Heart left ventricle (tissue), 16 donors: ENCODE measurements at regions of chr3 and their contacts with region 1.

Region 1: GRCh38 chr3:179562591-179563270 is at the start of gene ACTL6A:
- DNase-seq: peak; percentile 100
- ATAC-seq: peak; percentile 98 to 99 (median 99)
- H3K4me3 ChIP-seq: peak within 1 kb of the TSS; percentile 73 to 97 (median 90)
- H3K27ac ChIP-seq: peak within 1 kb of the TSS; percentile 72 to 94 (median 88)
- H3K4me1 ChIP-seq: peaks cover 0 to 24% (median 12%) of the 10 kb centered on the region in 12 donors
- H3K27me3 ChIP-seq: no peaks in the 10 kb centered on the region
- CTCF ChIP-seq: no peak
- POLR2A ChIP-seq: peak in 1 of 2 donors; percentile 55
- total RNA-seq, gene ACTL6A: 14.1 to 29.8 (median 19.8) TPM

Region 2: GRCh38 chr3:179071550-179072397 is 491.0 kb before region 1 on chr3 and contains the start of gene ZMAT3:
- intact Hi-C with region 1: loop called in 1 of 10 experiments (anchors 5 kb)
- DNase-seq: peak; percentile 92 to 95 (median 93)
- ATAC-seq: peak; percentile 78 to 99 (median 98)
- H3K4me3 ChIP-seq: peak within 1 kb of the TSS; percentile 49 to 96 (median 84)
- H3K27ac ChIP-seq: peak within 1 kb of the TSS; percentile 59 to 95 (median 90)
- H3K4me1 ChIP-seq: peaks cover 0 to 42% (median 21%) of the 10 kb centered on the region in 12 donors
- H3K27me3 ChIP-seq: no peaks in the 10 kb centered on the region
- CTCF ChIP-seq: peak in 2 of 12 donors; percentile 8 to 14
- POLR2A ChIP-seq: peak in 1 of 2 donors; percentile 79
- total RNA-seq, gene ZMAT3: 10.5 to 23.2 (median 15.6) TPM

Region 3: DNA sequence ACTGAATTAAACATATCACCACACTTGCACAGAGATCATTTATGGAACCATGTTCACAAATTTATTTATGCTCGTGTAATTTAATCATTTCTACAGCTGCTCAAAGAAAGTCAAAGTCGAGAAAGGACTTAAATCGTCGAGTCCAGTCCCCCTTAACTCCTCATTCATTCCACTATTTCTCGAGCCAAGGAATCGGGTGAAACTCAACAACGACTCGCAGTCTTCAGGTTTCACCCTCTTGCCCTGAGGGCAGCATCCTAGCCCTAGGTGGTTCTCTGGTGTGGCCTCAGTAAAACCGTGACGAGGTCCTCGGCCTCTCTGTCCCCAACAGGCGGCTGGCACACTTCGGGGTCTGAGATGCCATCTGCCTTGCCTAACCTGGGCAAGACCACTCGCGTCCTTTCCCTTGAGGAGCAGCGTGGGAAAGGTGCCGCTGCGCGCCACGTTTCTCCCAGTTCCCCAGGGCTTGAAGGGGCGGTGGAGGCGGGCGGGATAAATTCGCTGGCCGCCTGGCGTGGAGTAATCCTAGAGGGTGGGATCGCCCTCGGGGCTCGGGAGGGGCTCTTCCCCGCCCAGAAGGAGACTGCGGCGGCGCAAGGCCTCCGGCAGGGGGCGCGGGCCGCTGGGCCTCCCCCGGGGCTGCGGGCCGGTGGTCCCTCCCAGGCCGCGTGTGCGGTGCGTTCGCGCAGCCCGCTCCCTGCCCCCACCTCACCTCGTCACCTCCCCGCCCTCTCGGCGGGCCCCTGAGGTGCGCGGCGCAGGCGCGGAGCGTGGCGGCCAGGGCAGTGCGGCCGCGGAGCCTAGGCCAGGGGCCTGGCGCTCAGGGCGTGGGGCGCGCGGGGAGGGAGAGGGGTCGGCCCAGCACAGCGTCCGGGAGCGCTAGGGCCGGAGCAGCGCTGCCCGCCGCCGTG is 240.2 kb before region 1 on chr3 and contains the start of gene ZNF639:
- intact Hi-C with region 1: loop called in 4 of 10 experiments (anchors 2 to 10 kb)
- DNase-seq: peak; percentile 85 to 92 (median 89)
- ATAC-seq: peak; percentile 82 to 92 (median 90)
- H3K4me3 ChIP-seq: peak within 1 kb of the TSS; percentile 38 to 97 (median 90)
- H3K27ac ChIP-seq: peak within 1 kb of the TSS; percentile 87 to 98 (median 96)
- H3K4me1 ChIP-seq: peaks cover 0 to 36% (median 22%) of the 10 kb centered on the region in 12 donors
- H3K27me3 ChIP-seq: no peaks in the 10 kb centered on the region
- CTCF ChIP-seq: peak; percentile 61 to 93 (median 89)
- POLR2A ChIP-seq: peak in 1 of 2 donors; percentile 66
- total RNA-seq, gene ZNF639: 27.1 to 46.0 (median 30.7) TPM

Region 4: DNA sequence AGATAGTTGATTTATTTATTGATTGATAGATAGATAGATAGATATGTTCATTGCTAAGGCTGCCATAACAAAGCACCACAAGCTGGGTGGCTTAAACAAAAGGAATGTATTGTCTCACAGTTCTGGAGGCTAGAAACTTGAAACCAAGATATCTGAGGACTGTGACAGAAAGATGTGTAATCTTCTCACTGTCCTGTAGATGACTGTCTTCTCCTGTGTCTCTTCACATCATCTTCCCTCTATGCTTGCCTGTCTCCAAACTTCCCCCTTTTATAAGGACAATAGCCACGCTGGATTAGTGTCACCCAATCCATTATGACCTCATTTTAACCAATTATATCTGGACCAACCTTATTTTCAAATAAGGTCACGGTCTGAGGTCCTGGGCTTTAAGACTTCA is 152.4 kb before region 1 on chr3:
- intact Hi-C with region 1: no loop called
- DNase-seq: no peak
- ATAC-seq: no peak
- H3K4me3 ChIP-seq: no peak overlapping the region
- H3K27ac ChIP-seq: no peak overlapping the region
- H3K4me1 ChIP-seq: peaks cover 0 to 7% (median 2%) of the 10 kb centered on the region in 12 donors
- H3K27me3 ChIP-seq: no peaks in the 10 kb centered on the region
- CTCF ChIP-seq: no peak
- POLR2A ChIP-seq: no peak

Region 5: DNA sequence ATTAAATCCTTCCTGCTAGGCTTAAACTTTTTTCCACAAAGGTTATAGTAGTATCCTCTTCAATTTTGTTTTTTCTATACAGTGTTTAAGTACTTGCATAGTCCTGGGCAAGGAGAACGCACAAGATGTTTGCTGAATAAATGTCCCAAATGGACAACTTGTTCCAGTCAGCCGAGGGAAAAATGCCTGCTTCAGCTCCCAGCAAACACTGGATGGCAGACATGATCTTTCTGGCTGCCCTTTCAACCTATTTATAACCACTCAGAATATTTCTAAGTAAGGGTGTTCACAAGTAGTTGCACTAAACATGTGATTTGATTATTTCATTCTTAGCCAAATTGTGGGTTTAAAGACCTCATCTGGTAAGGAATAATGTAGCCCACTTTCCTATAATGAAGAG is 141.2 kb before region 1 on chr3:
- intact Hi-C with region 1: loop called (anchors 1 to 2 kb)
- DNase-seq: peak in 4 of 5 donors; percentile 24 to 46 (median 32)
- ATAC-seq: peak; percentile 63 to 89 (median 87)
- H3K4me3 ChIP-seq: no peak overlapping the region
- H3K27ac ChIP-seq: peak overlapping the region in 5 of 12 donors; percentile 5 to 50 (median 19)
- H3K4me1 ChIP-seq: peaks cover 0 to 13% (median 3%) of the 10 kb centered on the region in 12 donors
- H3K27me3 ChIP-seq: no peaks in the 10 kb centered on the region
- CTCF ChIP-seq: peak; percentile 35 to 81 (median 67)
- POLR2A ChIP-seq: no peak

Region 6: DNA sequence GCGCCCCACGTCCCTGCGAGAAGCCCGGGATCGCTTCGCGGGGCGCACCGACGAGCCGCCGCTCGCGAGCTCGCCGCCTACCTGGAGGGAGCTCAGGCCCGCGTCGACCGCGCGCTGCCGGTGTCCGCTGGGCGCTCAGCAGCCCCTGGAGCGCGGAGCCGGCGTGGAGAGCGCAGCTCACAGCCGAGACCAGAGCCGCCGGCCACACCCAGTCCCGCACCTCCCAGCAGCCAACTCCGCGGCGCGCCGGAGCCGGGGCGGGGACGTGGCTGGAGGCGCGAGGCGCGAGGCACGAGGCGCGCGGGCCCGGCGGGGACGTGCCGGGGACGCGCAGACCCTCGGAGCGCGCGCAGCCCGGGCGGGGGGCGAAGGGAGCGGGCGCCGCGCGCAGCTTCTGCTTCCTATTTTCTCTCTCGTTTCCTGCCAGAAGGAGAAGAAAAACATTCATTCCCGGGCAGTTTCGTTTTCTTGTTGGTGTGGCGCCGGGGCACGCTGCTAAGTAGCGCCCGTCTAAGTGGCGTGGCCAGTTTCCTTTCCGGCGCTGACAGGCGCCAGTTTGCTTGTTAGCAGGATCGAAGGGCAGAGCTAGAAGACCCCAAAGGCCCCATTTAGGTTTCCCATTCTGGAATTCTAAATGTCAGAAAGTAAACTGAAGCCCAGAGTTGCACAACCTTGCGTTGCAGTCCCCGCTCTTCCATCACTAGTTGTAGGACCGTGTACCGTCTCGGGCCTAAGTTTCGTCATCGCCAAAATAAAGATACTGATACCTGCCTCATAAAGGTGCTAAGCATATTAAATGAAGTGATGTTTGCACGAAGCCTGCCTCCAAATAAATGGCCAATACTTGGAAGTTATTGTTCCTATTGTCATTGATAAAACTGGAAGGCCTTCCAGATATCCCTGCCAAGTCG is 111.2 kb before region 1 on chr3 and contains the start of gene GNB4:
- intact Hi-C with region 1: loop called in 6 of 10 experiments (anchors 1 to 5 kb)
- DNase-seq: peak; percentile 87 to 91 (median 89)
- ATAC-seq: peak; percentile 78 to 96 (median 86)
- H3K4me3 ChIP-seq: peak within 1 kb of the TSS; percentile 43 to 86 (median 82)
- H3K27ac ChIP-seq: peak within 1 kb of the TSS; percentile 82 to 97 (median 94)
- H3K4me1 ChIP-seq: peaks cover 7 to 50% (median 30%) of the 10 kb centered on the region in 12 donors
- H3K27me3 ChIP-seq: no peaks in the 10 kb centered on the region
- CTCF ChIP-seq: no peak
- POLR2A ChIP-seq: peak in 1 of 2 donors; percentile 65
- total RNA-seq, gene GNB4: 7.2 to 75.1 (median 12.5) TPM